WTC11 (cell line): ENCODE measurements at regions of chr16 and their contacts with region 1.

Region 1: GRCh38 chr16:24070851-24071250 is 185.3 kb upstream of the CACNG3 start:
- DNase-seq: peak; percentile 70
- ATAC-seq: peak; percentile 100
- H3K4me3 Mint-ChIP-seq: no peak overlapping the region
- H3K27ac Mint-ChIP-seq: no peak overlapping the region; the same call in 1 of the 2 replicates
- H3K4me1 Mint-ChIP-seq: peaks cover 11% of the 10 kb centered on the region
- H3K27me3 Mint-ChIP-seq: peaks cover 3% of the 10 kb centered on the region; the same call in 1 of the 2 replicates
- CTCF ChIP-seq: peak; percentile 55

Region 2: DNA sequence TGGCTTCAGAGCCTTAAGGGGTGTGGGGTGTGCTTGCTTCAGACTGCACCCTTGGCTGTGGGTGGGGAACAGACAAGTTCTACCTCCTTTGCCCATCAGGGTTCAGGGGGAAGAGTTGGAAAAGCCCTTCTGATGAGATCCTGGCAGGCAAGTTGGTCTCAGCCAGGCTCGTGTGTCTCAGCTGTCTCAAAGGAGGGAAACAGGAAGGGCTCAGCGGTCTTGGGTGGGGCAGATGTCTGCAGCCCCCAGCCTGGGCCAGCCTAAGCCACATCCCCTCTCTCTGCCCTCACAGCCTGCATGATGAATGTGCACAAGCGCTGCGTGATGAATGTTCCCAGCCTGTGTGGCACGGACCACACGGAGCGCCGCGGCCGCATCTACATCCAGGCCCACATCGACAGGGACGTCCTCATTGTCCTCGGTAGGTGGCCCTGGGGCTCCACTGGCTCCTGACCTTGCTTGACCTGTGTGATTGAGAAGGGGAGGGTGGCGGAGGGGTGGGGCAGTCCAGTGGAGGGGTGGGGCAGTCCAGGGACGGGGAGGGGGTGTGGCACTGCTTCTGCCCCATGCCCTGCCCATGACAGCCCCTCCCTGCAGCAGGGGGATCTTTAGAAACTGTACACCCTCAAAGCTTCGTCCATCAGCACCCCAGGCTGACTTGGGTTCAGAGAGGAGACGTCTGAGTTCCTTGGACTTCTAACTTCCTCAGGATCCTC is 35.6 kb before region 1 on chr16:
- CTCF ChIA-PET with region 1: no interaction called
- POLR2A ChIA-PET with region 1: no interaction called
- DNase-seq: no peak
- ATAC-seq: no peak
- H3K4me3 Mint-ChIP-seq: no peak overlapping the region
- H3K27ac Mint-ChIP-seq: no peak overlapping the region
- H3K4me1 Mint-ChIP-seq: peaks cover 2% of the 10 kb centered on the region; the same call in 1 of the 2 replicates
- H3K27me3 Mint-ChIP-seq: no peaks in the 10 kb centered on the region
- CTCF ChIP-seq: no peak

Region 3: GRCh38 chr16:24088767-24089166 is 17.9 kb after region 1 on chr16:
- CTCF ChIA-PET with region 1: interaction called, 10 read pairs
- POLR2A ChIA-PET with region 1: no interaction called
- DNase-seq: no peak
- ATAC-seq: no peak
- H3K4me3 Mint-ChIP-seq: no peak overlapping the region
- H3K27ac Mint-ChIP-seq: no peak overlapping the region
- H3K4me1 Mint-ChIP-seq: peaks cover 9% of the 10 kb centered on the region
- H3K27me3 Mint-ChIP-seq: no peaks in the 10 kb centered on the region
- CTCF ChIP-seq: no peak

Region 4: GRCh38 chr16:24125214-24125613 is 54.4 kb after region 1 on chr16:
- CTCF ChIA-PET with region 1: interaction called, 19 read pairs
- POLR2A ChIA-PET with region 1: no interaction called
- DNase-seq: no peak
- ATAC-seq: peak; percentile 73
- H3K4me3 Mint-ChIP-seq: no peak overlapping the region
- H3K27ac Mint-ChIP-seq: peak overlapping the region; percentile 38
- H3K4me1 Mint-ChIP-seq: peaks cover 30% of the 10 kb centered on the region
- H3K27me3 Mint-ChIP-seq: no peaks in the 10 kb centered on the region
- CTCF ChIP-seq: no peak

Region 5: GRCh38 chr16:24163935-24164334 is 93.1 kb after region 1 on chr16:
- CTCF ChIA-PET with region 1: interaction called, 24 read pairs
- POLR2A ChIA-PET with region 1: no interaction called
- DNase-seq: no peak
- ATAC-seq: peak; percentile 66; the same call in 1 of the 2 replicates
- H3K4me3 Mint-ChIP-seq: no peak overlapping the region
- H3K27ac Mint-ChIP-seq: peak overlapping the region; percentile 73; the same call in 1 of the 2 replicates
- H3K4me1 Mint-ChIP-seq: peaks cover 25% of the 10 kb centered on the region
- H3K27me3 Mint-ChIP-seq: no peaks in the 10 kb centered on the region
- CTCF ChIP-seq: no peak

Region 6: GRCh38 chr16:24208710-24209109 is 137.9 kb after region 1 on chr16:
- CTCF ChIA-PET with region 1: interaction called, 14 read pairs
- POLR2A ChIA-PET with region 1: no interaction called
- DNase-seq: peak; percentile 14
- ATAC-seq: peak; percentile 84
- H3K4me3 Mint-ChIP-seq: no peak overlapping the region
- H3K27ac Mint-ChIP-seq: 0 out of 2 replicates have a peak overlapping the region, but pooled peaks have one; percentile 19
- H3K4me1 Mint-ChIP-seq: peaks cover 35% of the 10 kb centered on the region
- H3K27me3 Mint-ChIP-seq: no peaks in the 10 kb centered on the region
- CTCF ChIP-seq: no peak

Region 7: DNA sequence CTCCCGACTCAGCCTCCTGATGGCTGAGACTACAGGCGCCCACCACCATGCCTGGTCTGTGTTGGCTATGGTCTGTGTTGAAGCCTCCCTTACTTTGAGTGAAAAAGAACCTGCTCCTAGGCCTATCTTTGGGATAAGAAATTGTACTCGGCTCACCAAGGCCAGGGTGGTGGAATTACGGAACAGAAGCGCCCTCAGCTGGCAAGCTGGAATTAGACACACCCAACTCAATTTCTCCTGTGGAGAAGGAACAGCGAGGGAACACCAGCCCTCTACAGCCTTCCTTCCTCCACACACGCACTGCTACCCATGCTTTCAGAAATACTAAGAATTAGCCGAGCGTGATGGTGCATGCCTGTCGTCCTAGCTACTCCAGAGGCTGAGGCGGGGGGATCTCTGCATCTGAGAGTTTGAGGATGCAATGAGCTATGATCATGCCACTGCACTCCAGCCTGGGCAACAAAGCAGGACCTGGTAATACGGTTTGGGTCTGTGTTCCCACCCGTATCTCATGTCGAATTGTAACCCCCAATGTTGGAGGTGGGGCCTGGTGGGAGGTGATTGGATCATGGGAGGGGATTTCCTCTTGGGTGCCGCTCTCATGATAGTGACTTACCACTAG is 428.5 kb after region 1 on chr16:
- CTCF ChIA-PET with region 1: interaction called, 54 read pairs
- POLR2A ChIA-PET with region 1: interaction called, 6 read pairs
- DNase-seq: peak; percentile 75
- ATAC-seq: peak; percentile 92
- H3K4me3 Mint-ChIP-seq: no peak overlapping the region
- H3K27ac Mint-ChIP-seq: no peak overlapping the region
- H3K4me1 Mint-ChIP-seq: peaks cover 7% of the 10 kb centered on the region
- H3K27me3 Mint-ChIP-seq: no peaks in the 10 kb centered on the region; the same call in 1 of the 2 replicates
- CTCF ChIP-seq: peak; percentile 44